ENCODE measurements at regions of chr4 and their contacts with region 1.

Region 1: DNA sequence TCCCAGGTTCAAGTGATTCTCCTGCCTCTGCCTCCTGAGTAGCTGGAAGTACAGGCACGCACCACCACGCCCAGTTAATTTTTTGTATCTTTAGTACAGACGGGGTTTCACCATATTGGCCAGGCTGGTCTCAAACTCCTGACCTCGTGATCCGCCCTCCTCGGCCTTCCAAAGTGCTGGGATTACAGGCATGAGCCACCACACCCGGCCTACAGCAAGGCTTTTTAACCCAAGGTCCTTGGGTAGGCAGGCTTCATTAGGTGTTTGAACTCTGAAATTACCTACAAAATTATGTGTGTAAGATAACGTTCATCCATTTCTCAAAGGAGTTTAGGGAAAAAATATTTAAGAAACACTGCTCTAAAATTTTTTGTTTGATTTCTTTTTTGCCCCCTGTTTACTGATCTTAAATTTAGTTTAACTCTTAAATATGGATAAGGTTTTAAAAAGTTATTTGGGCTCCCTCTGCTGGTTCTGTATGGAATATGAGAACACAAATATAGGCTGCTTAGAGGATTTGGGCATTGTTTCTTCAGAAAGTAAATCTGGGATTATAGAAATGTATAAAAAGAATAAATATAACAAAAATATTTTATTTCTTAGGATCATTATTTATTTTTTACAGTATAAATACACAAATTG is 92.8 kb downstream of the CBR4 start:
- DNase-seq: no peak

Region 2: DNA sequence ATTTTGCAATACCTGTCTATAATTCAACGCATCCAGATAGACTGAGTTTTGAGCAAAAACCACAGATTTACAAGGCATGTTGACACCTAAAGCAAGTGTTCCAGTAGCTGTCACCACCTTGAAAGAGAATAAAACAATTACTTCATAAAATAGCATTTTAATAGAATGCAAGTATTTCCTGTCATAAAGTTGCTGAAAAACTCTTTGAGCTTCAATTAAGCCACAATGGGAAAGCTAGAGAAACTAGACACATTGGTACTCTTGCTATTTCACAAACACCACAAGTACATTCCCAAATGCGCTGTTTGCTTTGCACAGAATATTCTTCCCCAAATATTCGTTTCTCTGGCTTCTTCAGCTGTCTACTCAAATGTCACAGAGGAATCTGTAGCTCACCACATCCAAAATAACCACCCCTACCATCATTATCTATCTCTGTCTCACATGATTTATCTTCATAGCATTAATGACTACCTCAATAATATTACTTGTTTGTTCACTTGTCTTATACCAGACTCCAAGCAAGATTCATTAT is 669.0 kb before region 1 on chr4:
- intact Hi-C with region 1: no loop called
- DNase-seq: no peak

Region 3: GRCh38 chr4:168710353-168710946 is 206.8 kb before region 1 on chr4:
- intact Hi-C with region 1: loop called (anchors 5 kb)
- DNase-seq: peak in 3 of 10 donors; percentile 12 to 16 (median 12)

Region 4: DNA sequence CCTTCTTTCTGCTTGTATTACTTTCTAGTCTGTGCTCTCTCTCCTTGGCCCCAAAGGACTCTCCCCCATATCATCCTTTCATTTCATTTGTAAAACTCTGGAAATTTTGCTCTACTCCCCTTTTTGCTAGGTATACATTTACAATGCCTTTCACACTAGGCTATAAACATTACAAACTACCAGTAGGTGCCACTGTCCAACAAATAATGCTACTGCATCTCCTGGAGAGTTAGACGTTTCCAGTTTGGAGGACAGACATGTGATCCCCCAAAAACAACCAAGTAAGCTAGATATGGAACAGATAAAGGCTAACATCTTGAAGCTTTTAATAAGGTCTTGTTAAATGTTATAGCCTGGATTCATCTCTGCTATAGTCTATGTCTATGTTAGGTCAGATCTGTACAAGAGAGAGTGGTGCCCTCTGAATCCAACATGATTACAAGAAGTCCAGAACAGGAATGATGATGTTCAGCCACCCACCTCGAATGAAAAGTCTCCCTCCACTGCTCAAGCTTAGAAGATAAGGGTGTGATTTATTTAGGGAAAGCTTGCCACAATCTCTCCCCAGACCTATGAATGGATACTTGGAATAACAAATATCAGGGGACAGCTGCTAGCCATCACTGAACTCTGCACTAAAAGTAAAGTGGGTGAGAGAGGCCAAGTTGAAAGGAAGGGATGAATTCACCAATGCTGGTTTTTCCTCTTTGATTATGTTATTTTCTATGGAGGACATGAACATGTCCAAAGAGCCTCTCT is 78.5 kb after region 1 on chr4:
- intact Hi-C with region 1: no loop called
- DNase-seq: no peak